HEK293 (cell line): ENCODE measurements at regions of chr22 and their contacts with region 1.

Region 1: GRCh38 chr22:33920927-33921524 is 750 bp upstream of the LARGE1 start:
- H3K4me3 ChIP-seq: peak overlapping the region; percentile 81
- H3K27ac ChIP-seq: peak overlapping the region; percentile 54; the same call in 1 of the 2 replicates
- H3K4me1 ChIP-seq: peaks cover 16% of the 10 kb centered on the region
- CTCF ChIP-seq: no peak

Region 2: DNA sequence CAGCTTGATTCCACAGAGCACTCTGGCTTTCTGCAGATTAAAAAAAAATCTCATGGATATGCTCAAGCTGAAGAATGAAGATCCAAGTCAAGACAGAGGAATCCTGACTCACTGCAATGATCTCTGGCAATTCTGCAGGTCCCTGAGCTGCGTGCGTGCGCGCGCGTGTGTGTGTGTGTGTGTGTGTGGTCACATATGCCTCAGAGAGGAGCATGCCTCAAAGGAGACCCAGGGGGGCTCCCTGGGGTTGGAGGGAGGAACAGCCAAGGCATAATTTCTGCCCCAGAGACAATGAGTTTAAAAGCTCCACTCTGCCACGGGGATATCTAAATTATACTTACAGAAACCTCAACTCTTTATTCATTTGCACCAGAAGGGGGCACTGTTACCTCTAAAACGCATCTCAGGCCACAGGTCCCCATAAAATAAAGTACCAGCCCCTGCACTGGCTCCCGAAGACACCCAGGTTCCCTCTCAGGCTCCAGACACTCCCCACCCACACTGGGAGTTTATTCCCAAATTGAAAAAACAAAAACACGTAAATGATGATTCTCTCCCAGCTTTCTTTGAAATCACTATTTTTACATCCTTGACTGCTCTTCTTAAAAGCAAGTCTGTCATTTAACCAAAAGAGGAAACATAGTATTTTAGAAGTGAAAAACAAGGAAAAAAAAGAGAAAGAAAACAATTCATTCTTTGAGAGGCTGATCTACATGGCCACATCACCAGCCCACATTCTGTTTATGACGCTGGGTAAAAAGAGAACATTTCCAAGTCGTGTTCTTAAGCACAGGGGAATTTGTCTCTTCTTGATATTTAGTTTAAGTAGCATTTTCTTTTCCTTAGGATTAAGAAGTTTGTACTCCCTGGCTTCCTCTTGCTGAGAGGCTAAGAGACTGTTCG is 401.7 kb before region 1 on chr22:
- CTCF ChIA-PET with region 1: interaction called, 11 read pairs
- POLR2A ChIA-PET with region 1: no interaction called
- H3K4me3 ChIP-seq: no peak overlapping the region
- H3K27ac ChIP-seq: no peak overlapping the region
- H3K4me1 ChIP-seq: no peaks in the 10 kb centered on the region
- CTCF ChIP-seq: no peak

Region 3: GRCh38 chr22:33817512-33818127 is 103.4 kb before region 1 on chr22:
- CTCF ChIA-PET with region 1: no interaction called
- POLR2A ChIA-PET with region 1: no interaction called
- H3K4me3 ChIP-seq: no peak overlapping the region
- H3K27ac ChIP-seq: no peak overlapping the region
- H3K4me1 ChIP-seq: no peaks in the 10 kb centered on the region
- CTCF ChIP-seq: no peak

Region 4: DNA sequence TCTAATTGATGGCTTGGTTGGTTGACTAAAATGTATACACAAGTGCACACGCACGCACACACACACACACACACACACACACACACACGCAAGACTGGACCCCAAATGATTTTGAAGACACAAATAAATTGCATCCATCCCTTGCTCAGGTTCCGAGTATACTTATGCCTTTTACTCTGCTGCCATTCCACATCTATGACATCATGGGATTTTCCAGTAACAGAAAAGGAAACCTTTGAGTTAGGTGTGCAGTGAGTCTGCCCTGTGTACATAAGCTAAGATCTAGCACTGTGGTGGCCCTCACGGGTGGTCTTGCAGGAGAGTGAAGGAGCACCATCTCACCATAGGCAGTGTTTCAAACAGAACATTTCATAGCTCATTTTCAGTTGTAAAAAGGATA is 19.7 kb after region 1 on chr22:
- CTCF ChIA-PET with region 1: interaction called, 21 read pairs
- POLR2A ChIA-PET with region 1: interaction called, 9 read pairs
- H3K4me3 ChIP-seq: no peak overlapping the region
- H3K27ac ChIP-seq: no peak overlapping the region
- H3K4me1 ChIP-seq: no peaks in the 10 kb centered on the region
- CTCF ChIP-seq: no peak

Region 5: DNA sequence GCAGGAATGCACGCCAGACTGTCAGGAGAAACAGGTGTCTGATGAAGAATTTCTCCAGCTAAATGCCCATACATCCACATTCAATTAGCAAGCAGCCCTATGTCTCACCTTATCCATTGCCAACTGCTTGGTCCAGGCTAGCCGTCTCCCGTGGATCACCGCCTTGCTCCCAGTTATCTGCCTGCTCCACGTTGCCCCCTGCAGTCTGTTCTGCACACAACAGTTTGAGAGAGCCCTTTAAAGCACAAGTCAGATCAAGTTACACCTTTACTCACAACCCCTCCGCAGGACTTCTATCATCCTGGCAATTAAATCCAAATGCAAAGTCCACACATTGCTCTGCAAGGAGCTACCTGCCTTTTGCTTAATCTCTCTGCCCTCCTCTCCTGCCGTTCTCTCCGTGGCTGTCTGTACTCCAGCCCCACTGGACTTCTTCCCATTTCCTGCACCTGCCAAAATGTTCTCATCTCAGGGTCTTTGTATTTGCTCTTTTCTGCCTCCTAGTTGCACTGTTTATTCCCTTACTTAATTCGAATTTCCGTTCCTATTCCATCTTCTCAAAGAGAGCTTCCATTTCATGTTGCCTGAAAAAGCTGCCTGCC is 184.5 kb after region 1 on chr22:
- CTCF ChIA-PET with region 1: interaction called, 52 read pairs
- POLR2A ChIA-PET with region 1: no interaction called
- H3K4me3 ChIP-seq: no peak overlapping the region
- H3K27ac ChIP-seq: no peak overlapping the region
- H3K4me1 ChIP-seq: no peaks in the 10 kb centered on the region; the same call in 1 of the 2 replicates
- CTCF ChIP-seq: no peak; the same call in 1 of the 2 replicates